Activated CD8-positive, alpha-beta T cell treated with anti-CD3 and anti-CD28 coated beads for 36 hours (primary cell): ENCODE measurements at regions of chr17 and their contacts with region 1.

Region 1: GRCh38 chr17:81101614-81102306 is 63.5 kb upstream of the PVALEF start:
- DNase-seq: peak; percentile 90
- ATAC-seq: peak; percentile 99
- H3K4me3 Mint-ChIP-seq: no peak overlapping the region
- H3K27ac Mint-ChIP-seq: no peak overlapping the region
- H3K4me1 Mint-ChIP-seq: peaks cover 16% of the 10 kb centered on the region
- H3K27me3 Mint-ChIP-seq: no peaks in the 10 kb centered on the region
- CTCF ChIP-seq: peak; percentile 100

Region 2: DNA sequence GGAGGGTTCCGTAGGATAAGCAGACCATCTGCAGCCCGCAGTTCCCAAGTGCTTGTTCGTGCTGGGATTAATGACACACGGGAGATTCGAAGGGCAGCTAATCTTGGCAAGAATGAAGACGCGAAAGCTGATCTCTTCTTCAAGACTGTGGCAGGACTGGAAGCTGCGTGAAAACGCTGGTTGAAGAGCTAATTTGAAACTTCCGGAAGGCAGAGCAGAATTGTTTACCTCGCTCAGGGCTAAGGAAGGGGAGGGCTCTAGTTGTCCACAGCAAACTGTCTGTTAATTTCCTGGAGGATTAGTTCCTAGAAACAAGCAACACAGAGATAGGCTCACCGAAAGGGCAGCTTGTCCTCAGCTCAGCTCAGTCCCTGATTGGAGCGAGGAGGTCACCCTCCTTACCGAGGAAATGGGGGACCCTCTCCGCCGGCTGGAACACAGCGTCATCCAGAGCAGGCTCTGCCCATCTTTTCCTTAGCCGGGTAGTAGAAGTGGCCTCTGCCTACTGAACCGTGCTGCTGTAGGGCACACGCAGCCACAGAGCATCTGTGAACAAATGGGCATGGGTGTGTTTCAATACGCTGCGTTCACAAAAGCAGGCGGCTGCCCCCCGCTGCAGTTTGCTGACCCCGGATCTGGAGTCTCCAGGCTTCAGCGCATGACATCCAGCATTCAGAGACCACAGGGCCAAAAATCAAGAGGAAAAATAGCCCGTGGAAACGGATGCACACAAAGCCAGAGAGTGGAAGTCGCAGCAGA is 83.5 kb before region 1 on chr17:
- CTCF ChIA-PET with region 1: interaction called, 55 read pairs
- POLR2A ChIA-PET with region 1: interaction called, 4 read pairs
- intact Hi-C with region 1: no loop called
- DNase-seq: peak; percentile 71
- ATAC-seq: peak; percentile 92
- H3K4me3 Mint-ChIP-seq: peak overlapping the region; percentile 73
- H3K27ac Mint-ChIP-seq: peak overlapping the region; percentile 93
- H3K4me1 Mint-ChIP-seq: peaks cover 31% of the 10 kb centered on the region
- H3K27me3 Mint-ChIP-seq: no peaks in the 10 kb centered on the region
- CTCF ChIP-seq: no peak

Region 3: DNA sequence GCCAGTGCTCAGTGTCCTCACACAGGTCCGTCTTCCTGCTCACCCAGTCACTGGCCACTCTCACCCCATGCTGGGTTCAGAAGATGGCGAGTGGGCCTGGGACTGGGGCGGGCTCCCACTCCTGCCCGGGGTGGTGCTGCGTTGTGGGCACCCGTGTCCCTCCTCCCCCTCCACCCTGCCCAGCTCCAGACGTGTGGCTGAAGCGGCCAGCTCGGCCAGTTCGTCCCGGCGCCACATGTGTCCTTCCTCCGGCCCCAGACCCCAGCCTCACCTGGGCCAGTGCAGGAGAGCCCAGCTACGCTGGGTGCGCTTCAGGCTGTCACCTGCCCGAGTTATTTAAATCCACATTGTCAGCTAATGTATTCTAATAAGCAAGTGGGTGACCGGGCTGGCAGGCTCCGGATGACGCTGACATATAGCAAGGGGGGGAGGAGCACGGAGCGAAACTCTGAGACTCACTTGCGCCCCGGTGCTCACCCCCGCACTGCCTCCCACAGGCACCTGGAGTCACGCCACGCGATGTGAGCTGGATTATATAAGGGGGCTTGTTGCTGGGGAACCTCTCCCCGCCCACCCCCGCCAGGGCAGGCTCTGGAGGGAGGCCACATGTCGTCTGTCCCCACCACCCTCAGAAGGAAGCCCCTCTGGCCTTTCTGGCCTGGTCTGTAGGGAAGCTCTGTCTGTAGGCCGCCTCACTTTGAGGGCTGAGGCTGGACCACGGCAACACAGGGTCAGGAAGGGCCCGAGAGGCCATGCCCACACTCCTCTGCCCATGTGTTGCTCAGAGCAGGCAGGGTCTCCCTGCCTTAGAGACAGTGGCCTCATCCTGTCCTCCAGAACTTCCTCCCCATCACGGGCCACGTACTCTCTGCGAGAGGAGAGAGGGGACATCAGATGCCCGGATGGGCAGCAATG is 73.9 kb before region 1 on chr17:
- CTCF ChIA-PET with region 1: interaction called, 55 read pairs
- POLR2A ChIA-PET with region 1: interaction called, 4 read pairs
- intact Hi-C with region 1: loop called (anchors 5 kb)
- DNase-seq: peak; percentile 67
- ATAC-seq: peak; percentile 53
- H3K4me3 Mint-ChIP-seq: no peak overlapping the region
- H3K27ac Mint-ChIP-seq: no peak overlapping the region
- H3K4me1 Mint-ChIP-seq: peaks cover 13% of the 10 kb centered on the region
- H3K27me3 Mint-ChIP-seq: peaks cover 9% of the 10 kb centered on the region
- CTCF ChIP-seq: no peak

Region 4: GRCh38 chr17:81034779-81035388 is 66.9 kb before region 1 on chr17 and contains the start of gene BAIAP2:
- CTCF ChIA-PET with region 1: interaction called, 10 read pairs
- POLR2A ChIA-PET with region 1: interaction called, 3 read pairs
- intact Hi-C with region 1: no loop called
- DNase-seq: peak; percentile 97
- ATAC-seq: peak; percentile 89
- H3K4me3 Mint-ChIP-seq: peak within 1 kb of the TSS; percentile 78
- H3K27ac Mint-ChIP-seq: peak within 1 kb of the TSS; percentile 75
- H3K4me1 Mint-ChIP-seq: peaks cover 8% of the 10 kb centered on the region
- H3K27me3 Mint-ChIP-seq: peaks cover 10% of the 10 kb centered on the region
- CTCF ChIP-seq: no peak
- total RNA-seq, gene BAIAP2: 5.9 to 6.3 TPM

Region 5: DNA sequence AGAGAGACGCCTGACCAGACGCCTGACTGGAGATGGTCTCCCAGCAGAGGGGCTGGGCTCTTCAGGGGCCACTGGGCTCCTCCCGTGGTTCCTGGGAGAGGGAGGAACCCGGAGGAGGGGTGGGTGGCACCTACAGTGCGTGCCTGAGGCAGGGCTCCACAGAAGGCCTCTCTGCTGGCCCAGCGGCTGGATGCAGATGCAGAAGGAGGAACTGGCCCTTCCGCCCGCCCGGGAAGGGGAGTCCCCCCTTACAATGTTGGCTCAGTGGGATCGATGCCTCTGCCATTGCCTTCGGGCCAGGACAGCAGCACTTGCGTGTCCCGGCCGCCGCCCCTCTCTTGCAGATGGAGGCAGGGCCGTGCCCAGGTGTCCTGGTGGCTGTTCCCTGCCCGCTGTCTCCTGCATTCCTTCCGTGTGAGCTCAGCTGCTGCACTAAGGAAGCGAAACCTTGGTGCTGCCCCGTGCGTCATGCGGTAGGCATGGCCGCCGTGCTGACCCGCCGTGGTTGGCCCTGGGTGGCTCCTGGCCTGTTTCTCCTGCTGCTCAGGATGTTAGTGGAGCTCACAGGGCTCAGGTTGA is 51.7 kb before region 1 on chr17:
- CTCF ChIA-PET with region 1: interaction called, 13 read pairs
- POLR2A ChIA-PET with region 1: no interaction called
- intact Hi-C with region 1: no loop called
- DNase-seq: no peak
- ATAC-seq: no peak
- H3K4me3 Mint-ChIP-seq: no peak overlapping the region
- H3K27ac Mint-ChIP-seq: no peak overlapping the region
- H3K4me1 Mint-ChIP-seq: peaks cover 16% of the 10 kb centered on the region
- H3K27me3 Mint-ChIP-seq: no peaks in the 10 kb centered on the region
- CTCF ChIP-seq: no peak

Region 6: DNA sequence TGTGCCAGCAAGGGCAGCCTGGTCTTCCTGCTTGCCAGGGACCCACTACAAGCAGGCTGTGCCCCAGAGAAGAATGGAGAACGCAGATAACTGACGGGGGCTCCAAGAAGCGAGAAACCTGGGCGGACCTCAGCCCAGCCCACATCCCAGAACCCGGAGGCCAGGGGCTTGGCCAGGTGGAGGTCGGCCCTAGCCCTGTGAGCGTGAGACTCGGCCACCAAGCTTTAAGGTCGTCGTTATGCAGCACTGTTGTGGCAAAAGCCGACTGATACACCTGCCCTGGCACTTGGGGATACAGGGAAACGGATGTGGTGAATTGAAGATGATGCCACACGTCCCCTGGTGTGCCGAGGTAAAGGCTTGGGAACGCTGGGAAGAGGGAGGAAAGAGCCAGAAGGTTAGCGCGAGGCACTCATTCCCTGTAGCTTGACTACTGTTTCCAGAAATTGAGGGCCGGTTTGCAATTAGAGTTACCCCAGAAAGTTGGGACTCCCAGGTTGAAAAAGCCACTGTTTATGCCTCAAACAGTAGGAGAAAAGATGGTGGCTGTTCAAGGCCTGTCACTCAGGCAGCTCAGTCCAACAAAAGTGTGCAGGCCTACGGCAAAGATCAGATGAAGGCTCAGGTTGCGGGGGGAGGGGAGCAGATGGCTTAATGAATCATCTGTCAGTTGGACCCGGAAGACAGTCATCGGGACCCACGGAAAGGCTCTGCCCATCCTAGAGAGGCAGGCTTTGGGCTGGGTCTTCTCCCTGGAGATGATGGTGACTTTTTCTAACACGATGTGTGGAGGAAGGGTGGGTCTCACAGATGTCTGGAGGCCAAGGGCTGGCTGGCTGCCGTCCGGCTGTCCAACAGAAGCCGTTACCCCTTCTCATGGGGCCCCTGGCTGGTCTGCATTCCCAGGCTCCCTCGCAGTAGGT is 247.9 kb after region 1 on chr17:
- CTCF ChIA-PET with region 1: no interaction called
- POLR2A ChIA-PET with region 1: no interaction called
- intact Hi-C with region 1: no loop called
- DNase-seq: no peak
- ATAC-seq: no peak
- H3K4me3 Mint-ChIP-seq: no peak overlapping the region
- H3K27ac Mint-ChIP-seq: no peak overlapping the region
- H3K4me1 Mint-ChIP-seq: peaks cover under 1% of the 10 kb centered on the region
- H3K27me3 Mint-ChIP-seq: peaks cover 3% of the 10 kb centered on the region
- CTCF ChIP-seq: no peak